ENCODE measurements at regions of chr13 and their contacts with region 1.

Region 1: DNA sequence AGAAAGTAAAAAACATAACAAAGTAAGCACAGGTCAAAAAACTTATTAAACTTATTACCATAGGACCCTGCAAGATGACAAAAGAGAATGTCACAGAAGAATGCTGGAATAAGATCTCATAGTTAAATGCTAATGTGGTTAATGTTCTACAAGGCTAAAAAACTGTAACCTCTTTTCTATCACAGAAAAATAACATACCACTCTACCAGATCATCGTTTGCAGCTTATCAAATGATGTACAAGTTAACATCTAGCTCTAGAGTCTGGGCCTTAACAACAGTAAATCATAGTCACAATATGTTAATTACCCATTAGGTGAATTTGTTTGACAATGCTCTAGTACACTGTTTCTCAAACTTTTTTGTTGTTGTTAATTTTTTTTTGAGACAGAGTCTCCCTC is 53.0 kb downstream of the NUFIP1 start:
- DNase-seq: no peak
- ATAC-seq: no peak
- H3K4me3 ChIP-seq: no peak overlapping the region
- H3K27ac ChIP-seq: no peak overlapping the region
- H3K4me1 ChIP-seq: peaks cover 0 to 6% of the 10 kb centered on the region in 2 experiments; a peak in 1 of 4 replicates
- H3K27me3 ChIP-seq: no peaks in the 10 kb centered on the region
- CTCF ChIP-seq: no peak
- POLR2A ChIP-seq: no peak
- RAD21 ChIP-seq: no peak

Region 2: DNA sequence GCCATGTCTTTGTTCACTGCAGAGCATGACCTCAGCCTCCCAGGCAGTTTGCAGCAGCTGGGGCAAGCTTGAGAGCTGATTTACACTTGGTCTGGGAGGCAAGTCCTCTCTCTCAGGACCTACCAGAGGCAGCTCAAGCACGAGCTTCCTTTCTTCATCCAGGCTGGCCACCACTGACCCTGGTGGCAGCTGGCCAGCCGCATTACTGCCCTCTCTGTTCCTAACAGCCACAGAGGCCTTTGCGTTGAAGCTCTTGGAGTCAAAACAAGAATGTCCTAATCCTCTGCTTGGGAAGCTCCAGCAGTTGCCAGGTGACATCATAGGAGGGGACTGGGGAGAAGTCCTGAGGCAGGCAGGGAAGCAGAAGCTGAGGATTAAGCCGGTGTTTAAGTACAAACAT is 32.6 kb before region 1 on chr13:
- CTCF ChIA-PET with region 1: no interaction called
- POLR2A ChIA-PET with region 1: no interaction called
- RAD21 ChIA-PET with region 1: no interaction called
- intact Hi-C with region 1: loop called (anchors 2 kb)
- DNase-seq: no peak
- ATAC-seq: no peak
- H3K4me3 ChIP-seq: no peak overlapping the region
- H3K27ac ChIP-seq: no peak overlapping the region
- H3K4me1 ChIP-seq: no peaks in the 10 kb centered on the region
- H3K27me3 ChIP-seq: no peaks in the 10 kb centered on the region; the same call in 1 of the 2 replicates
- CTCF ChIP-seq: no peak
- POLR2A ChIP-seq: no peak
- RAD21 ChIP-seq: no peak

Region 3: GRCh38 chr13:45055198-45055901 is 119.1 kb after region 1 on chr13:
- CTCF ChIA-PET with region 1: no interaction called
- POLR2A ChIA-PET with region 1: no interaction called
- RAD21 ChIA-PET with region 1: no interaction called
- intact Hi-C with region 1: no loop called
- DNase-seq: peak; percentile 70
- ATAC-seq: peak; percentile 81
- H3K4me3 ChIP-seq: peak overlapping the region in 1 of 2 experiments; percentile 33; a peak in 3 of 4 replicates
- H3K27ac ChIP-seq: peak overlapping the region; percentile 69
- H3K4me1 ChIP-seq: peaks cover 18 to 44% of the 10 kb centered on the region in 2 experiments
- H3K27me3 ChIP-seq: no peaks in the 10 kb centered on the region
- CTCF ChIP-seq: no peak
- POLR2A ChIP-seq: no peak
- RAD21 ChIP-seq: 0 out of 2 replicates have a peak, but pooled peaks have one; percentile 23

Measured in HCT116 (cell line).